Activated CD4-positive, alpha-beta T cell treated with anti-CD3 and anti-CD28 coated beads for 36 hours (primary cell): ENCODE measurements at regions of chrX and their contacts with region 1.

Region 1: GRCh38 chrX:18203631-18204030 is 17.1 kb downstream of the BEND2 start:
- DNase-seq: no peak
- ATAC-seq: no peak
- H3K4me3 Mint-ChIP-seq: no peak overlapping the region
- H3K27ac Mint-ChIP-seq: no peak overlapping the region
- H3K4me1 Mint-ChIP-seq: no peaks in the 10 kb centered on the region
- H3K27me3 Mint-ChIP-seq: no peaks in the 10 kb centered on the region

Region 2: DNA sequence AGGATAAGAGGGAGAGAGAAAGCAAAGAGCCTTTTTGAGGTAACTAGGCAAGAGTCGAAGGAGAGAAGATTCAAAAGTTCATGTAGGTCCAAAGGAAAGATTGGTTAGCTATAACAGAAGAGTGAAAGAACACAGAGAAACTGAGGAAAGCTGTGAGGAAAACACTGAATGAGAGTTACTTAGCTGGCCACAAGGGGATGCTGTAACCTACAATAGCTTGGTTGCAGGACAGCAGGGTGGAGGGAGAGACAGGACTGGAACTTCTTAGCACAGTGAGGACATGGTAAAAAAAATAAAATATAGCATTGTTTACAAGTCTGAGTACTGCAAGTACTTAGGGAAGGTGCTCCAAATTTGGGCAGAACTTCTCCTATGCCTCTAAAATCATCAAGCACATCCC is 390.9 kb before region 1 on chrX:
- CTCF ChIA-PET with region 1: interaction called, 4 read pairs
- POLR2A ChIA-PET with region 1: no interaction called
- intact Hi-C with region 1: loop called in 1 of 2 experiments (anchors 10 kb)
- DNase-seq: no peak
- ATAC-seq: no peak
- H3K4me3 Mint-ChIP-seq: no peak overlapping the region
- H3K27ac Mint-ChIP-seq: no peak overlapping the region
- H3K4me1 Mint-ChIP-seq: no peaks in the 10 kb centered on the region
- H3K27me3 Mint-ChIP-seq: no peaks in the 10 kb centered on the region